ENCODE measurements at regions of chr7 and their contacts with region 1.

Region 1: GRCh38 chr7:141072548-141073172 is 1.2 kb upstream of the TMEM178B start:
- DNase-seq: no peak
- ATAC-seq: peak; percentile 69
- H3K4me3 ChIP-seq: peak overlapping the region; percentile 37 to 46
- H3K27ac ChIP-seq: no peak overlapping the region
- H3K4me1 ChIP-seq: peaks cover 6% of the 10 kb centered on the region; the same call in 1 of the 2 replicates
- H3K27me3 ChIP-seq: peaks cover 53% of the 10 kb centered on the region
- CTCF ChIP-seq: no peak

Region 2: GRCh38 chr7:141533149-141533949 is 460.7 kb after region 1 on chr7:
- CTCF ChIA-PET with region 1: interaction called, 12 read pairs
- POLR2A ChIA-PET with region 1: no interaction called
- in situ Hi-C with region 1: no loop called
- intact Hi-C with region 1: no loop called
- DNase-seq: peak; percentile 69
- ATAC-seq: peak; percentile 96
- H3K4me3 ChIP-seq: no peak overlapping the region
- H3K27ac ChIP-seq: no peak overlapping the region
- H3K4me1 ChIP-seq: no peaks in the 10 kb centered on the region; the same call in 1 of the 2 replicates
- H3K27me3 ChIP-seq: peaks cover 3% of the 10 kb centered on the region
- CTCF ChIP-seq: peak; percentile 94

Measured in Panc1 (cell line).